Heart left ventricle (tissue), 16 donors: ENCODE measurements at regions of chr20 and their contacts with region 1.

Region 1: DNA sequence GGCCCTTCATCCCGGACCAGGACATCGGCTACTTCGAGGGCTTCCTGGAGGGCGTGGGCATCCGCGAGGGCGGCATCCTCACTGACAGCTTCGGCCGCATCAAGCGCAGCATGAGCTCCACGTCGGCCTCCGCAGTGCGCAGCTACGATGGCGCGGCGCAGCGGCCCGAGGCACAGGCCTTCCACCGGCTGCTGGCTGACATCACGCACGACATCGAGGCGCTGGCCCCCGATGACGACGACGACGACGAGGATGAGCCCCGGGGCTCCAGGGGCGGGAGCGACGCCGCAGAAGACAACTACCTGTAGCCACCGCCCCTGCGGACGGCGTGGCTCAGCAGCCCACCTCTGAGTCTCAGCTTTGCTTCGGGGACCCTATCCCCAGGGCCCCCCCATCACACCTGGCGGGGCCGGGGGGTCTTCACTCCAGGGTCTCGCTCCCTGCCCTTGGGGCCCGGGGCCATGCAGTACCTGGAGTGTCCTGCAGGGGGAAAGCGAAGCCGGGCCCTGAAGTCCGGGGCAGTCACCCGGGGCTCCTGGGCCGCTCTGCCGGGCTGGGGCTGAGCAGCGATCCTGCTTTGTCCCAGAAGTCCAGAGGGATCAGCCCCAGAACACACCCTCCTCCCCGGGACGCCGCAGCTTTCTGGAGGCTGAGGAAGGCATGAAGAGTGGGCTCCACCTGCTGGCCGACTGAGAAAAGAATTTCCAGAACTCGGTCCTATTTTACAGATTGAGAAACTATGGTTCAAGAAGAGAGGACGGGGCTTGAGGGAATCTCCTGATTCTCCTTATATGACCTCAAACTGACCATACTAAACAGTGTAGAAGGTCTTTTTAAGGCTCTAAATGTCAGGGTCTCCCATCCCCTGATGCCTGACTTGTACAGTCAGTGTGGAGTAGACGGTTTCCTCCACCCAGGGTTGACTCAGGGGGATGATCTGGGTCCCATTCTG is 20.8 kb upstream of the HCK start:
- DNase-seq: peak; percentile 78 to 88 (median 84)
- ATAC-seq: peak; percentile 72 to 90 (median 82)
- H3K4me3 ChIP-seq: peak overlapping the region in 11 of 12 donors; percentile 2 to 42 (median 32)
- H3K27ac ChIP-seq: no peak overlapping the region
- H3K4me1 ChIP-seq: peaks cover 3 to 50% (median 8%) of the 10 kb centered on the region in 12 donors
- H3K27me3 ChIP-seq: peaks cover 0 to 28% (median 4%) of the 10 kb centered on the region in 9 donors
- CTCF ChIP-seq: peak; percentile 82 to 97 (median 90)
- POLR2A ChIP-seq: no peak

Region 2: DNA sequence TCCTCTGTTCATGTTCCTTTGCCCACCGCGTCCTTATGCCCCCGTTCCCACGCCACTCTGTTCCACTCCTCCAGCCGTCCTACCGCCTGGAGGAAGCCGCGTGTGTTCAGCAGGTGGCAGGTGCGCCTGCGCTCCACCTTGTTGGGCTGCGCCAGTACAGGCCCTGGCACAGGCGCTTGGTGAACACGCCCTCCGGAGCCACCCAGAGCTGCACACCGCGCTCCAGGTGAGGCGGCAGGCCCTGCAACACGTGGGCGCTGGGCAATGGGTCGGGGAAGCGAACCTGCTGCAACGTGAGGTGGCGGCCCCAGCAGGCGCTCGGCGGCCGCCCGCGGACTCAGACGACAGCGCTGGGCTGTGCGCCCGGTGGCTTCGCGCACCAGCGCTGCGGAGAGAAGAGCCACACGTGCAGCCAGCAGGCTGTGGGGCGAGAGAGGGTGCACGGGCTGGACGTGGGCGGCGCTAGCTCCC is 181.8 kb before region 1 on chr20:
- intact Hi-C with region 1: loop called (anchors 2 to 10 kb)
- DNase-seq: no peak
- ATAC-seq: peak in 1 of 4 donors; percentile 19
- H3K4me3 ChIP-seq: no peak overlapping the region
- H3K27ac ChIP-seq: no peak overlapping the region
- H3K4me1 ChIP-seq: peaks cover 0 to 19% (median 2%) of the 10 kb centered on the region in 12 donors
- H3K27me3 ChIP-seq: peaks cover 0 to 54% (median 19%) of the 10 kb centered on the region in 9 donors
- CTCF ChIP-seq: no peak
- POLR2A ChIP-seq: no peak

Region 3: GRCh38 chr20:31859998-31860709 is 171.1 kb before region 1 on chr20:
- intact Hi-C with region 1: loop called in 1 of 10 experiments (anchors 10 kb)
- DNase-seq: peak in 2 of 5 donors; percentile 40
- ATAC-seq: peak in 3 of 4 donors; percentile 65 to 74 (median 73)
- H3K4me3 ChIP-seq: peak overlapping the region in 7 of 12 donors; percentile 49 to 80 (median 61)
- H3K27ac ChIP-seq: no peak overlapping the region
- H3K4me1 ChIP-seq: peaks cover 4 to 22% (median 13%) of the 10 kb centered on the region in 12 donors
- H3K27me3 ChIP-seq: peaks cover 0 to 34% (median 2%) of the 10 kb centered on the region in 9 donors
- CTCF ChIP-seq: no peak
- POLR2A ChIP-seq: no peak

Region 4: DNA sequence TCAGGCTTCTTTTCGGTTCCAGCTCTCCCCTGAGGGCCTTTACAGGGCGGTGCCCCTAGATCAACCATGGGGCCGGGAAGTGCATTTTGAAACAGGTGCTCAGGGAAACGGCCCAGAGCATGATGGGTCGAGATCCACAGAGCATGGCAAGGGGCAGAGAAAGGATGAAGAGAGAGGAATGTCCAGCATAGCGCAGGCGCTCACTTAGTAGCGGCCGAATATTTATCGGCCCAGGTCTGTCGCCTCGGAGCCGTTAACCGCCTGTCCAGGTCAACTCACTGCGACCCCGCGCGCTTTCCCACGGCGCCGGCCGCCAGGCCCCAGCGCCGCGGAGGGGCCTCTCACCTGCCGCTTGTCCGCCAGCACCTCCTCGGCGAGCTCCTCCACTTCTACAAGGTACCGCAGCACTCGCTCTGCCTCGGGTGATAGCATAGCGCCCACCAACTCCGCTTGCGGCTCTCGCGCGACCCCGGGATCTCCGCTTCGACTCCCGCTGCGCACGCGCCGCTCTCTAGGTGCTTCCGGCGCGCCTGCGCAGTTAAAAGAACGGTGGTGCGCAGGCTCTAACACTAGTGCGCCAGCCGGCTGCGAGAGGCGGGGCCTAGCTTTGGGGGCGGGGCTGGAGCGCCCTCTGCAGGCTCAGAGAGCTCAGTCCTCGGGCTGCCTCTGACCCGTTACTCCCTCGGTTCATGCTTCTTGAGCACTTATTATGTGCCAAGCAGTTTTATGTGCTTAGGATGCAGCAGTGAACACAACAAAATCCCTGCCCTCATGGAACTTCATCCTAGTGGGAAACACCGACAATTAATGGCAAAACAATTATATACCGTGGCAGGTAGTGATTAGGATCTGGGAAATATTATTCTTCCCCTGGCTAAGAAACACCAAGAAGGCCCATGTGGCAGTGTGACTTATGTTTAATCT is 79.5 kb before region 1 on chr20 and contains the start of gene PDRG1:
- intact Hi-C with region 1: loop called in 8 of 10 experiments (anchors 1 to 10 kb)
- DNase-seq: peak; percentile 94 to 98 (median 96)
- ATAC-seq: peak; percentile 96 to 99 (median 98)
- H3K4me3 ChIP-seq: peak within 1 kb of the TSS; percentile 65 to 100 (median 94)
- H3K27ac ChIP-seq: peak within 1 kb of the TSS in 11 of 12 donors; percentile 69 to 95 (median 85)
- H3K4me1 ChIP-seq: peaks cover 0 to 20% (median 15%) of the 10 kb centered on the region in 12 donors
- H3K27me3 ChIP-seq: peaks cover 0 to 8% (median 0%) of the 10 kb centered on the region in 9 donors
- CTCF ChIP-seq: peak; percentile 93 to 99 (median 97)
- POLR2A ChIP-seq: peak in 1 of 2 donors; percentile 89
- total RNA-seq, gene PDRG1: 5.2 to 10.7 (median 7.3) TPM

Region 5: GRCh38 chr20:32091888-32092346 is 60.6 kb after region 1 on chr20:
- intact Hi-C with region 1: loop called in 2 of 10 experiments (anchors 5 kb)
- DNase-seq: peak; percentile 68 to 83 (median 75)
- ATAC-seq: peak in 3 of 4 donors; percentile 74 to 80 (median 78)
- H3K4me3 ChIP-seq: no peak overlapping the region
- H3K27ac ChIP-seq: no peak overlapping the region
- H3K4me1 ChIP-seq: peaks cover 0 to 5% (median 0%) of the 10 kb centered on the region in 12 donors
- H3K27me3 ChIP-seq: no peaks in the 10 kb centered on the region
- CTCF ChIP-seq: peak; percentile 82 to 96 (median 91)
- POLR2A ChIP-seq: no peak

Region 6: GRCh38 chr20:32652739-32653526 is 621.6 kb after region 1 on chr20:
- intact Hi-C with region 1: loop called in 1 of 10 experiments (anchors 10 kb)
- DNase-seq: peak; percentile 85 to 92 (median 86)
- ATAC-seq: peak; percentile 93 to 98 (median 97)
- H3K4me3 ChIP-seq: no peak overlapping the region
- H3K27ac ChIP-seq: no peak overlapping the region
- H3K4me1 ChIP-seq: peaks cover 0 to 5% (median 1%) of the 10 kb centered on the region in 12 donors
- H3K27me3 ChIP-seq: no peaks in the 10 kb centered on the region
- CTCF ChIP-seq: peak; percentile 90 to 96 (median 94)
- POLR2A ChIP-seq: no peak